ENCODE measurements at regions of chr6 and their contacts with region 1.

Region 1: DNA sequence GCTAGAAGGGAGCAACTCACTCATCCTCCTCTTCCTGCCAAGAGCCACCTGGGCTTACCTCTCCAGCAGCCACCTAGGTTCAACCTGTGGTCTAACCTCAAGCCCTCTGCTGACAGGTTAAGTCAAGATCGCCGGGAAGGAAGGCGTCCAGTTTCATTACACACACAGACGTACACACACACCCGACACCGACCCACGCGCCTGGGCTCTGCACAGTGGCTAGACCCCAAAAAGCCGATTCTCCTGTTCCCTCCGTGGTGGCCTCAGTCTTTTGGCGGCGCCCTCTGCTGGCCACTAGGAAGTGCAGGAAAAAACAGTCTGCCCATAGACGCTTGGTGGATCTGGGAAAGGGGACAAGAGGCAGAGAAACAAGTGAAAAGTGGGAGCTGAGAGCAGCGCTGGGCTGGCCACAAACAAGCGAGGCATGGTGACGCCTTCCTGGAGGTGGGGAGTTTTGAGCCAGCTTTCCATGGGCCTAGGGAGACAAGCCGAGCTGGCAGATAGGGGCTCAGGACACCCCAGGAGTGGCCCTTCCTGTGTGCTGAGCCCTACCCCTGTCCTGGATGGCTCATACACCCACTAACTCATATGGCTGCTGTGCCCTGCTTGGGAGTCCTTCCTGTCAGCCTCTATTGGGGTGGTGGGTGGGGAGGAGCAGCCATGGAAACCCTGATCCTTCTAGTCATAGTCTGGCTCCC is 52.7 kb downstream of the MRPL14 start:
- DNase-seq: peak; percentile 54 to 83
- ATAC-seq: peak; percentile 51 to 57
- H3K4me3 ChIP-seq: peak overlapping the region in 1 of 4 donors; percentile 21
- H3K27ac ChIP-seq: peak overlapping the region; percentile 81 to 93 (median 90)
- H3K4me1 ChIP-seq: peaks cover 32 to 41% of the 10 kb centered on the region in 2 donors
- H3K27me3 ChIP-seq: no peaks in the 10 kb centered on the region
- CTCF ChIP-seq: peak; percentile 89 to 94 (median 93)
- POLR2A ChIP-seq: no peak

Region 2: GRCh38 chr6:43667245-43668150 is 407.1 kb before region 1 on chr6:
- in situ Hi-C with region 1: loop called (anchors 25 kb)
- intact Hi-C with region 1: loop called (anchors 1 kb)
- DNase-seq: peak; percentile 62 to 85
- ATAC-seq: peak; percentile 67 to 69
- H3K4me3 ChIP-seq: peak overlapping the region in 3 of 4 donors; percentile 17 to 30 (median 18)
- H3K27ac ChIP-seq: peak overlapping the region; percentile 95 to 97 (median 96)
- H3K4me1 ChIP-seq: peaks cover 54 to 59% of the 10 kb centered on the region in 2 donors
- H3K27me3 ChIP-seq: no peaks in the 10 kb centered on the region
- CTCF ChIP-seq: peak; percentile 98
- POLR2A ChIP-seq: peak in 1 of 2 donors; percentile 34

Region 3: DNA sequence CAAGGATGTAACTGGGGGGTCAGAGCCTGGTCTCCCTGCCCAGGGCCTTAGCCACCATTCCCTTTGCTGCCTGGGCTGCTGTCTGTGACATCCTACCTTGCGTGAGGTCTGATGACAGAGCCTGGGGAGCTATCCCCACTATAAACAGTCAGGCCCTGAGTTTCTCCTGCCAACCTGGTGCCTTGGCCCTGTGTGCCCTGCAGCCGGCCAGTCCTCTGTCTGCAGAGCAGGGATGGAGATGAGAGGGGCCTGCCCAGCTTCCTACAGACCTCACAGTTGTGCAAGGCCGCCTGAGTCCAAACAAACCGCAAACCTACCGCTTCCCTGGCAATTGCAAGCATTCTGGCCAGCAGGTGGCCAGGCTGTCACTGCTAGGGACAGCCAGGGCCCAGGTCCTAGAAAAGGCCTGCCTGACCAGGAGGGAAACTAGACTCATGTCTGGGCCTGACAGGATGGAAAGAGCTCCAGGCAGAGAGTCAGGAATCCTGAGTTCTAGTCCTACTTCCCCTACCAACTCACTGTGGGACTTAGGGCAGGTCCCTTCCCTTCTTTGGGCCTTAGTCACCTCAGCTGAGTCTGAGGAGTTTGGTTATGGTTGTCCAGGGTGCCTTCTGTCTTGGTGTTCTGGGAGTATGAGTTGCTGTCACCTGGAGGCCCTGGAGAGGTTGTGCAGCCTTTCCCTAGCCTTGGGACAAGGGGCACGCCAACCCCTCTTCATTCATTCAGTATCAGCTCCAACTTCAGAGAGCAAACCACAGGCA is 218.4 kb before region 1 on chr6:
- in situ Hi-C with region 1: no loop called
- intact Hi-C with region 1: loop called (anchors 1 kb)
- DNase-seq: peak; percentile 20 to 66
- ATAC-seq: peak; percentile 63 to 92
- H3K4me3 ChIP-seq: no peak overlapping the region
- H3K27ac ChIP-seq: peak overlapping the region; percentile 6 to 49 (median 23)
- H3K4me1 ChIP-seq: no peaks in the 10 kb centered on the region
- H3K27me3 ChIP-seq: no peaks in the 10 kb centered on the region
- CTCF ChIP-seq: peak; percentile 47 to 73 (median 65)
- POLR2A ChIP-seq: no peak

Region 4: DNA sequence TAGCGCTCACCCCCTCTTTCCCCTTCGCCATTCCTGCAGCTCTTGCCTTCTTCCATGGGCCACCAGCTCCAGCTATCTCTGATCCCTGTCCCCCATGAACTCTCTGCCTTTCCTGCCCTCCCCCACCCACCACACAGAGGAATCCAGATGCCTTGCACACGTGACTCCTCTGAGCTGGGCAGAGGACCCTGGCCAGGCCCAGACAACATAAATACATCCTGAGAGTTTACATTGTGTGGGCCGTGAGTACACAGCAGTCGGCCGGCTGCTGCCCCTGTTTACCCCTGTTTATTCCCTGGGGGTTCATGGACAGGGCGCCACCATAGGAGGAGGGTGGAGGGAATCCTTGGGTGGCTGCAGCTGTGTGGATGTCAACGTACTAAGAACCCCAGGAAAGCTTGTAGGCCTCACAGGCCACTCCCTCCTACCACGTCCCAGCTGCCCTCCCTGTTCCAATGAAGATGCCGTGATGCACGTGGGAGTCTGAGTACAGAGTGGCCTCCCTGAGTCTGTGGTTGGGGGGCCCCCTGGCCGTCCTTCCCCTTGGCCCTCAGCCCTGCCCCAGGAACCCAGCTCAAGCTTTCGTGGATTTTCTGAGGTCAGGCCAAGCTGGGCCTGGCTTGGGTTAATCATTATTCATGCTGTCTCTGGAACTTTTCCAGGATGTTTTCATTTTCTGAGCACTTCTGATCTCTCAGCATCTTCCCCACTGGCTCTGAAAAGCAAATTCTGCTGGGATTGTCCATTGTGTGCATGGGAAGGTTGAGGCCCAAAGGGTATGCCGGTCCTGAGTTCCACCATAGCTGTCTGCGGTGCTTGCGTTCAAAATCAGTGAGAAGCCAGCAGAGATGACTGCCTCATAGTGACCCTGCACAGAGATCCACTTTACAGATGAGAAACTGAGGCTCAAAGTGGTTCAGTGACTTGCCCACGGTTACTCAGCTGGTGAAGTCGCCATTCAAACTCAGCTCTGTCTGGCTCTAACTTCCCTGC is 83.7 kb before region 1 on chr6:
- in situ Hi-C with region 1: no loop called
- intact Hi-C with region 1: loop called (anchors 2 kb)
- DNase-seq: peak in 1 of 2 donors; percentile 58
- ATAC-seq: no peak
- H3K4me3 ChIP-seq: no peak overlapping the region
- H3K27ac ChIP-seq: peak overlapping the region; percentile 90 to 100 (median 99)
- H3K4me1 ChIP-seq: peaks cover 54 to 64% of the 10 kb centered on the region in 2 donors
- H3K27me3 ChIP-seq: no peaks in the 10 kb centered on the region
- CTCF ChIP-seq: no peak
- POLR2A ChIP-seq: peak in 1 of 2 donors; percentile 6

Region 5: GRCh38 chr6:44285552-44286284 is 211.1 kb after region 1 on chr6:
- in situ Hi-C with region 1: no loop called
- intact Hi-C with region 1: no loop called
- DNase-seq: no peak
- ATAC-seq: no peak
- H3K4me3 ChIP-seq: no peak overlapping the region
- H3K27ac ChIP-seq: no peak overlapping the region
- H3K4me1 ChIP-seq: no peaks in the 10 kb centered on the region
- H3K27me3 ChIP-seq: peaks cover 17 to 25% (median 17%) of the 10 kb centered on the region in 3 donors
- CTCF ChIP-seq: no peak
- POLR2A ChIP-seq: no peak